ENCODE measurements at regions of chr12 and their contacts with region 1.

Region 1: GRCh38 chr12:104171785-104172442 is 33.9 kb upstream of the NFYB start:
- DNase-seq: peak; percentile 80 to 97 (median 94)
- ATAC-seq: peak; percentile 98
- H3K4me3 ChIP-seq: peak overlapping the region; percentile 13
- H3K27ac ChIP-seq: peak overlapping the region; percentile 89
- H3K4me1 ChIP-seq: peaks cover 5 to 12% of the 10 kb centered on the region in 2 experiments; a peak in 4 of 5 replicates
- H3K27me3 ChIP-seq: no peaks in the 10 kb centered on the region
- CTCF ChIP-seq: no peak
- EP300 ChIP-seq: peak; percentile 47; the same call in 1 of the 2 replicates
- POLR2A ChIP-seq: peak; percentile 63
- RAD21 ChIP-seq: 0 out of 4 replicates have a peak, but pooled peaks of 1 of the 2 experiments have one; percentile 4

Region 2: DNA sequence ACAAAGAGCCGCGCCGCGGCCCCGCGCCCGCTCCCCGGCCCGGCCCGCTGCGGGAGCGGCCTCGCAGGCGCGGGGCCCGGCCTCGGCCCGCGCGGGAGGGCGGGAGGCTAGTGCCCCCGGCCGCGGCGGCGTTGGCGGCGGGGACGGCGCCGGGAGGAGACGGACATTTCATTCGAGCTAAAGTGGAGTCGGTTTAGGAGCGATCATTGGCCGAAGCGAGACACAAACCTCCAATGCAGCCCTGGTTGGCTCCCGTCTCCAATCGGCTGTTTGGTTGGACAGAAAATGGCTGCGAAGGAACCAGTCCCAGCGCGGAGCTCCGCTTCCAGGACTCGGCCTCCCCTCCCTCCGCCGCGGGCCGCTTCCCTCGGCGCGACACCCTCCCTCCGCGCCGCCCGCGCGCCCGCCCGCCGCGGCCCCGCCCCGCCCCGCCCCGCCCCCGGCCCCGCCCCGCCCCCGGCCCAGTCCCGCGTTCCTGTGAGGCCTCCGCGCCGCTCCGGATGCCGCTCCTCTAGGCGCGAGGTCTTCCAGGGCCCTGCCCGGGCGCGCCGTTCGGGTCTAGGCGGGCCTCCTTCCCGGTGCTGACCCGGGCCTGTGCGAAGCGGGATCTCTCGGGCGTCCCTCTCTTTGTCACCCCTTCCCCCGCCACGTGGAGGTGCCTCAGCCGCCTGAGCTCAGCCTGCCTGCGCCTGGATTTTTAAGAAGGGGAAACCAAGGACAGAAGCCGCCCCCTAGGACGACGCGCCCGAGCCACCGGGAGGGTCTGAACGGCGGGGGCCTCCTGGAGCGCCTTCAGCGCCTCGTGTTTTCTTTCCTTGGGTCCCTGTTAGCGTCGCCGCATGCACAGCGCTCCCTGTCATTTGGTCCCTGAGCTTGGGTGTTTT is 33.8 kb before region 1 on chr12 and contains the start of gene NFYB:
- CTCF ChIA-PET with region 1: no interaction called
- POLR2A ChIA-PET with region 1: interaction called, 3 read pairs
- in situ Hi-C with region 1: no loop called
- intact Hi-C with region 1: loop called (anchors 2 kb)
- DNase-seq: peak; percentile 93 to 96 (median 94)
- ATAC-seq: peak; percentile 93
- H3K4me3 ChIP-seq: peak within 1 kb of the TSS; percentile 69
- H3K27ac ChIP-seq: peak within 1 kb of the TSS; percentile 89
- H3K4me1 ChIP-seq: peaks cover 12 to 19% of the 10 kb centered on the region in 2 experiments
- H3K27me3 ChIP-seq: no peaks in the 10 kb centered on the region; a peak in 1 of 5 replicates
- CTCF ChIP-seq: no peak
- EP300 ChIP-seq: peak; percentile 99
- POLR2A ChIP-seq: peak; percentile 79
- RAD21 ChIP-seq: no peak
- polyA plus RNA-seq, gene NFYB: 47.4 to 51.5 TPM

Region 3: GRCh38 chr12:104314242-104314614 is 142.3 kb after region 1 on chr12:
- CTCF ChIA-PET with region 1: no interaction called
- POLR2A ChIA-PET with region 1: no interaction called
- in situ Hi-C with region 1: no loop called
- intact Hi-C with region 1: no loop called
- DNase-seq: no peak
- ATAC-seq: no peak; the same call in 2 of the 3 replicates
- H3K4me3 ChIP-seq: no peak overlapping the region
- H3K27ac ChIP-seq: no peak overlapping the region
- H3K4me1 ChIP-seq: peaks cover 0 to 3% of the 10 kb centered on the region in 2 experiments; a peak in 2 of 5 replicates
- H3K27me3 ChIP-seq: no peaks in the 10 kb centered on the region
- CTCF ChIP-seq: no peak
- EP300 ChIP-seq: no peak
- POLR2A ChIP-seq: no peak
- RAD21 ChIP-seq: no peak